Endothelial cell of umbilical vein (primary cell): ENCODE measurements at regions of chr6 and their contacts with region 1.

Region 1: DNA sequence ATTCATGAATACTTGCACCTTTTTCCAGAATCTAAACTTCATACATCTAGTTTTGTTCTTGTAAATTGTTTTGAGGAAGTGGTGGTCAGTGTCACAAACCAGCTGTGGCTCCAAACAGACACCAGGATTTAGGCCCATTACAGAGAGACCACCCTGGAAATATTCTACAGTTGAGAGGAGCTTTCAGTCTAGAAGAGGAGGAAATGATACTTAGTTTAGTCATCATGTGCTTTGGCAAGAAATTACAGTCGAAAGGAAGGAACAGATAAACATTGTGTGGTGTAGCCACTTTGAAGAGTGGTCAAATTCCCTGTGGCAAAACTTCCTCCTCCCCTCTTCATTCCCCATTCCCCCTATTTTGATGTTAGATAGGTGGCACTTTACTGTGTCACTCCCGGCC is 15.7 kb downstream of the DCBLD1 start:
- DNase-seq: peak; percentile 88
- H3K4me3 ChIP-seq: no peak overlapping the region
- H3K27ac ChIP-seq: peak overlapping the region; percentile 99
- H3K4me1 ChIP-seq: peaks cover 74% of the 10 kb centered on the region
- H3K27me3 ChIP-seq: no peaks in the 10 kb centered on the region
- CTCF ChIP-seq: no peak
- POLR2A ChIP-seq: peak; percentile 51

Region 2: DNA sequence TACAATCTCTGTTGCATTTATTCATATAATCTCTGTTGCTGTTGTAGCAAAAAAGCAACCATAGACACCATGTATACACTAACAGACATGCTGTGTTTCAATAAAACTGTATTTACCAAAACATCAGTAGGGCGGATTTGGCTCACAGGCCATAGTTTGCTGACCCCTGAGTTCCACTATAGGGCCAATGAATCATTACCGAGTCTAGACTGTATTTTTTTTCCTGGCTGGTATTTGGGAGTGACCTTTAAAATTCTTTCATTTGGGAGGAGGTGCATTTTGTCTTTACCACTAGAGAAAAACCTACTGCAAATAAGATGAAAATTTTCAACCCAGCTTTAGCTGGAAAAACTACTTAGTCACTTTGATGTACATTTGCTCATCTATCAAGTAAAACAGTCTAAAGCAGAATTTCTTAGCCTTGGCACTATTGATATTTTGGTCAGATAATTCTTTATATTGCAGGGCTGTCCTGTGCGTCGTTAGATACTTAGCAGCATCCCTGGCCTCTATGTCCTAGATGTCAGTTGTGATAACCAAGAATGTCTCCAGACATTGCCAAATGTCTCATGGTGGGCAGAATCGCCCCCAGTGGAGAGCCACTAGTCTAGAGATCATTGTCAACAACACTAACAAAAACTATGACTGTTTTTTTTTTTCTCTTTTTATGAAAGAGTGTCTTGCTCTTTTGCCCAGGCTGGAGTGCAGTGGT is 23.8 kb after region 1 on chr6:
- CTCF ChIA-PET with region 1: no interaction called
- POLR2A ChIA-PET with region 1: no interaction called
- dilution Hi-C with region 1: no loop called
- intact Hi-C with region 1: loop called (anchors 1 kb)
- DNase-seq: peak; percentile 47
- H3K4me3 ChIP-seq: no peak overlapping the region
- H3K27ac ChIP-seq: peak overlapping the region; percentile 32
- H3K4me1 ChIP-seq: peaks cover 22% of the 10 kb centered on the region
- H3K27me3 ChIP-seq: no peaks in the 10 kb centered on the region
- CTCF ChIP-seq: no peak
- POLR2A ChIP-seq: no peak

Region 3: GRCh38 chr6:117536317-117536716 is 38.2 kb after region 1 on chr6:
- CTCF ChIA-PET with region 1: no interaction called
- POLR2A ChIA-PET with region 1: no interaction called
- dilution Hi-C with region 1: no loop called
- intact Hi-C with region 1: loop called (anchors 2 kb)
- DNase-seq: no peak
- H3K4me3 ChIP-seq: no peak overlapping the region
- H3K27ac ChIP-seq: no peak overlapping the region
- H3K4me1 ChIP-seq: peaks cover 17% of the 10 kb centered on the region
- H3K27me3 ChIP-seq: no peaks in the 10 kb centered on the region
- CTCF ChIP-seq: no peak
- POLR2A ChIP-seq: no peak

Region 4: DNA sequence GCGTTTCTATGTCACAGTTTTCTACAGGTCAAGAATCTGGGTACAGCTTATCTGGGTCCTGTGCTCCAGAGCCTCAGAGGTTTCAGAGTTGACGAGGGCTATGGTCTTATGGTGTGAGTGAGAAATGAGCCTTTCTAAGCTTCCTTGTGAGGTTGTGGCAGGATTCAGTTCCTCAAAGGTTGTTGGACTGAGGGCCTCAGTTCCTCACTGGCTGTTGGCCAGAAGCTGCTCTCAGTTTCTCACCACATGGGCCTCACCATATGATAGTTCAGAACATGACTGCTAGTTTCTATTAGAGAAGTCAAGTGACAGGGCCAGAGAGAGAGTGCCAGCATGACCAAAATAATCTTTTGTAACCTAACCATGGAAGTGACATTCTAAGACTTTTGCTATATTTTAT is 273.2 kb after region 1 on chr6:
- CTCF ChIA-PET with region 1: no interaction called
- POLR2A ChIA-PET with region 1: no interaction called
- dilution Hi-C with region 1: no loop called
- intact Hi-C with region 1: no loop called
- DNase-seq: no peak
- H3K4me3 ChIP-seq: no peak overlapping the region
- H3K27ac ChIP-seq: no peak overlapping the region
- H3K4me1 ChIP-seq: no peaks in the 10 kb centered on the region
- H3K27me3 ChIP-seq: no peaks in the 10 kb centered on the region
- CTCF ChIP-seq: no peak
- POLR2A ChIP-seq: no peak